ENCODE measurements at regions of chr4 and their contacts with region 1.

Region 1: DNA sequence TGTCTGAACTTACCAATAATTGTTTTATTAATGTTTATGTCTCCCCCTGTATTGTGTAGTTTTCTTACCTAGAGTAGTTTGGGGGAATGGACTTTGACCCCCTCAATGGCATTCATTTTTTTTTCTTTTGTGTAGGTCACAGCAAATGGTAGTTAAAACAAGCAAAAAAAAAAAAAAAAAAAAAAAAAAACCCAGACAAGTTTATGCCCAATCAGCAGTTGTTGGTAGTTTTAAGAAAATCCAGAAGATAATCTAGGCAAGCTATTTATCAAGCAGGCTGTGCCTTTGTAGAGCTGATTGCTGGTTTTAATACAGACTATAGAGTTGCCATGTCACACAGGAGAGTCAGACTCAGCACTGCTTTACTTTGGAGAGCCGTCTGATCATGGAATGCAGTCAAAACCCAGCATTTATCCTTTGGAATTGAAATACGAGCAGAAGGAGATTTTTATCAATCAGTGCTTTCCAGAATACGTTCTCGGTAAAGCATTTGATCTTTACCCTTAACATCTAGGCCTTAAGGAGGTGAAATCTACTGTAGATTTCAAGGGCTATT is 16.6 kb downstream of the DCUN1D4 start:
- DNase-seq: no peak
- ATAC-seq: no peak
- H3K4me3 ChIP-seq: no peak overlapping the region
- H3K27ac ChIP-seq: no peak overlapping the region
- H3K4me1 ChIP-seq: no peaks in the 10 kb centered on the region
- H3K27me3 ChIP-seq: no peaks in the 10 kb centered on the region
- CTCF ChIP-seq: no peak
- POLR2A ChIP-seq: no peak
- RAD21 ChIP-seq: no peak

Region 2: DNA sequence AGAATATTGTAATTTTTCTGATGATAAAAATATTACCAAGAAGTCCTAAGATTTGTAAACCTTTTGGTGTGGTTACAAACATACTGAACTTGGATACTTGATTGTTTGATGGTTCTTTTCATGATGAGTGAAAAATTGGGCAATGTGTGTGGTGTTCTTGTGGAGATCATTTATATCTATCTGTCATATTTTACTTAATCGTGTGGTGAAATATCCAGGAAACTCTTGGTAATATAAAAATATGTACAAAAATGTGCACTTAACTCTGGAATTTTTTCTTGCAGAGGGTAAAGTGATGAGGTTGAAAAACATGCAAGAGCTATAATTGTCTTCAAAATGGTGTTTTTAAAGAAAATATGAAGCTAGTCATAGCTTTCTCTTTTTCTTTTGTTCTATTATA is 13.8 kb before region 1 on chr4:
- CTCF ChIA-PET with region 1: no interaction called
- POLR2A ChIA-PET with region 1: no interaction called
- RAD21 ChIA-PET with region 1: no interaction called
- intact Hi-C with region 1: loop called (anchors 2 kb)
- DNase-seq: no peak
- ATAC-seq: no peak
- H3K4me3 ChIP-seq: peak overlapping the region in 1 of 2 experiments; percentile 68; a peak in 1 of 4 replicates
- H3K27ac ChIP-seq: no peak overlapping the region
- H3K4me1 ChIP-seq: peaks cover 11 to 15% of the 10 kb centered on the region in 2 experiments; a peak in 3 of 4 replicates
- H3K27me3 ChIP-seq: no peaks in the 10 kb centered on the region
- CTCF ChIP-seq: no peak
- POLR2A ChIP-seq: no peak
- RAD21 ChIP-seq: no peak

Region 3: DNA sequence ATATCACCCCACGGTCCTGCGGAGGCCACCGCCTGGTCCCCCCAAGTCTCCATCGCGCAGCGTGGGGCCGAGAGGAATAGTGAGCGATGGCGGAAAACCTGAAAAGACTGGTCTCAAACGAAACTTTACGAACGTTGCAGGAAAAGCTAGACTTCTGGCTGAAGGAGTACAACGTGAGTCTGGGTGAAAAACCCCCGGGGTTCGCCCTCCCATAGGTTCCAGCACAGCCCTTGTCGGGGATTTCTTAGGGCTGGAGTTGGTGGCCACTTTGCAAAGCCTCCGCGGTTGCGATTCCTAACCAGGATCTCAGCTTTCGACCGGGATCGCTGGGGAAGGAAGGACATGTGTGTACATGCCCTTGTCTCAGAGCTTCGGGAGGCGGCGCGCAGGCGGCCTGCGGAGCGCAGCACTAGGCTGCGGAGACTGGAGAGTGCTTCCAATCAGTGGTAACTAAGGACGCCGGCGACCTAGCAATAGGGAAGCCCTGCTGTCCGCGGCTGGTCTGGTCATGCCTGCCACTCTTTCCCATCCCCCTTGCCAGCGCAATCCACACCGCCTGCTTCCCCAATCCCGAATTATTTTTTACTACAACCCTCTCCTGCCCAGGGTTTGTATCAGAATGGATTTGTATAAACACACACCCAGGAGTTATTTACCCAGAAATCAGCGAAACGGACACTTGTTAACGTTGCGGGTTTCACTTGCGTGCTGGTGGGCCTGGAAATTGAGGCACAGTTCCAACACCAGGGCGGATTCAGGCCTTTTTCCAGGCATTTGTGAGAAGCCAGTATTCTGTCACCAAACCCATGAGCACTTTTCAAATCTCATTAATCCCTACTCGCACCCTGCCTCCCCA is 192.3 kb after region 1 on chr4:
- CTCF ChIA-PET with region 1: no interaction called
- POLR2A ChIA-PET with region 1: no interaction called
- RAD21 ChIA-PET with region 1: no interaction called
- intact Hi-C with region 1: no loop called
- DNase-seq: no peak
- ATAC-seq: peak; percentile 72
- H3K4me3 ChIP-seq: peak overlapping the region; percentile 23 to 37; a peak in 3 of 4 replicates
- H3K27ac ChIP-seq: peak overlapping the region; percentile 8; the same call in 1 of the 2 replicates
- H3K4me1 ChIP-seq: no peaks in the 10 kb centered on the region; a peak in 1 of 4 replicates
- H3K27me3 ChIP-seq: peaks cover 13% of the 10 kb centered on the region
- CTCF ChIP-seq: no peak
- POLR2A ChIP-seq: no peak
- RAD21 ChIP-seq: no peak